ENCODE measurements at regions of chr19 and their contacts with region 1.

Region 1: GRCh38 chr19:38964738-38965137 is 10.8 kb downstream of the FBXO17 start:
- DNase-seq: no peak

Region 2: GRCh38 chr19:38989066-38989605 is 24.4 kb after region 1 on chr19:
- CTCF ChIA-PET with region 1: interaction called, 10 read pairs
- POLR2A ChIA-PET with region 1: interaction called, 3 read pairs
- DNase-seq: peak; percentile 36

Region 3: DNA sequence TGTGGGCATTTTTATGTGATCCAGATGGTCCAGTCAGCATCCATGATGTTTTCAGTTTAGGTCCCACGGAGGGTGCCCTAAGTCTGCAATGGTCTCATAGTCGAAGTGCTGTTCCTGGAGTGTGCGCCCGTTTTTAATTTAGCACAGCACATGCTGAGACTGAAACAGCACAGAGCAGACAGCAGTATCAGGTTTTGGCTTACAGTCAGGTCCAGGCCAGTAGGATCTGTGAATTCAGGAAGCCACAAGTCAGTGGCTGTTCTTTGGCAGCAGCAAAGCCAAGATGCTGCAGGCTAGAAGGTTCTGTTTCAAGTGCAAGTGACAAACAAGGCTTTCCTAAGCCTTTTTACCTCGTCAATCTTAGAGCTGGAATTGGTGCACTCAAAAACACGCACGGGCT is 49.3 kb after region 1 on chr19:
- CTCF ChIA-PET with region 1: no interaction called
- POLR2A ChIA-PET with region 1: no interaction called
- DNase-seq: no peak

Region 4: GRCh38 chr19:39052243-39052746 is 87.6 kb after region 1 on chr19:
- CTCF ChIA-PET with region 1: interaction called, 10 read pairs
- POLR2A ChIA-PET with region 1: no interaction called
- DNase-seq: peak; percentile 69

Measured in HEK293T (cell line).